Ovary (tissue), 10 donors: ENCODE measurements at regions of chr1 and their contacts with region 1.

Region 1: DNA sequence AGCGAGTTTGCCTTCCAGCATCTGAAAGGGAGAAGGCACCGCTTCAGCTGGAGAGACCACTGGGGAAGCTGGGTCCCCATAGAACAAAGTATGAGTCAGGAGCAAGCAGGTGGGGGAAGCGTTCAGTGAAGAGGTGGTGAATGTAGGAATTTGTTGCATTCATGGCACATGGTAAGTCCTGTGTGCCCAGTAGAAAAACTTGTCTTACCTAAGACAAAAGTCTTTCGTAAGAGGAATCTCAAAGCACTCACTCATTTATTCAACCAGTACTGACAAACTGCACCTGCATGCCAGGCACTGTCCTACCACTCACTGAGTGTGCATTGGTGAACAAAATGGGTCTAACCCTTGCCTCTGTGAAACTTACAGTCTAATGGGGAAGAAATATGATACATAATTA is 9.2 kb upstream of the ERRFI1 start:
- DNase-seq: no peak
- H3K4me3 ChIP-seq: no peak overlapping the region
- H3K27ac ChIP-seq: no peak overlapping the region
- H3K4me1 ChIP-seq: no peaks in the 10 kb centered on the region
- H3K27me3 ChIP-seq: no peaks in the 10 kb centered on the region
- CTCF ChIP-seq: no peak
- EP300 ChIP-seq: no peak
- POLR2A ChIP-seq: no peak

Region 2: GRCh38 chr1:8222789-8223188 is 187.5 kb after region 1 on chr1:
- intact Hi-C with region 1: loop called in 2 of 4 experiments (anchors 5 to 10 kb)
- DNase-seq: no peak
- H3K4me3 ChIP-seq: no peak overlapping the region
- H3K27ac ChIP-seq: no peak overlapping the region
- H3K4me1 ChIP-seq: no peaks in the 10 kb centered on the region
- H3K27me3 ChIP-seq: no peaks in the 10 kb centered on the region
- CTCF ChIP-seq: no peak
- EP300 ChIP-seq: no peak
- POLR2A ChIP-seq: no peak